ENCODE measurements at regions of chr19 and their contacts with region 1.

Region 1: GRCh38 chr19:11924886-11925650 is at the start of gene ZNF700:
- DNase-seq: peak; percentile 96
- ATAC-seq: peak; percentile 85
- H3K4me3 ChIP-seq: peak within 1 kb of the TSS; percentile 78 to 97 (median 80)
- H3K4me3 Mint-ChIP-seq: peak within 1 kb of the TSS; percentile 98
- H3K27ac ChIP-seq: peak within 1 kb of the TSS; percentile 95 to 97
- H3K27ac Mint-ChIP-seq: peak within 1 kb of the TSS; percentile 99
- H3K4me1 ChIP-seq: peaks cover 10 to 28% of the 10 kb centered on the region in 2 donors
- H3K4me1 Mint-ChIP-seq: peaks cover 40% of the 10 kb centered on the region
- H3K27me3 ChIP-seq: no peaks in the 10 kb centered on the region
- H3K27me3 Mint-ChIP-seq: no peaks in the 10 kb centered on the region
- CTCF ChIP-seq: no peak
- total RNA-seq, gene ZNF700: 34.9 and 40.5 TPM in 2 replicates

Region 2: GRCh38 chr19:11482384-11483050 is 442.6 kb before region 1 on chr19:
- CTCF ChIA-PET with region 1: no interaction called
- POLR2A ChIA-PET with region 1: no interaction called
- intact Hi-C with region 1: loop called (anchors 5 kb)
- DNase-seq: peak; percentile 93
- ATAC-seq: peak; percentile 79
- H3K4me3 ChIP-seq: peak overlapping the region in 4 of 5 experiments; percentile 20 to 48 (median 30)
- H3K4me3 Mint-ChIP-seq: peak overlapping the region; percentile 80
- H3K27ac ChIP-seq: no peak overlapping the region
- H3K27ac Mint-ChIP-seq: peak overlapping the region; percentile 80
- H3K4me1 ChIP-seq: peaks cover 37 to 42% of the 10 kb centered on the region in 2 donors
- H3K4me1 Mint-ChIP-seq: peaks cover 27% of the 10 kb centered on the region
- H3K27me3 ChIP-seq: peaks cover 0 to 46% (median 25%) of the 10 kb centered on the region in 4 experiments
- H3K27me3 Mint-ChIP-seq: peaks cover 34% of the 10 kb centered on the region
- CTCF ChIP-seq: peak; percentile 93

Region 3: DNA sequence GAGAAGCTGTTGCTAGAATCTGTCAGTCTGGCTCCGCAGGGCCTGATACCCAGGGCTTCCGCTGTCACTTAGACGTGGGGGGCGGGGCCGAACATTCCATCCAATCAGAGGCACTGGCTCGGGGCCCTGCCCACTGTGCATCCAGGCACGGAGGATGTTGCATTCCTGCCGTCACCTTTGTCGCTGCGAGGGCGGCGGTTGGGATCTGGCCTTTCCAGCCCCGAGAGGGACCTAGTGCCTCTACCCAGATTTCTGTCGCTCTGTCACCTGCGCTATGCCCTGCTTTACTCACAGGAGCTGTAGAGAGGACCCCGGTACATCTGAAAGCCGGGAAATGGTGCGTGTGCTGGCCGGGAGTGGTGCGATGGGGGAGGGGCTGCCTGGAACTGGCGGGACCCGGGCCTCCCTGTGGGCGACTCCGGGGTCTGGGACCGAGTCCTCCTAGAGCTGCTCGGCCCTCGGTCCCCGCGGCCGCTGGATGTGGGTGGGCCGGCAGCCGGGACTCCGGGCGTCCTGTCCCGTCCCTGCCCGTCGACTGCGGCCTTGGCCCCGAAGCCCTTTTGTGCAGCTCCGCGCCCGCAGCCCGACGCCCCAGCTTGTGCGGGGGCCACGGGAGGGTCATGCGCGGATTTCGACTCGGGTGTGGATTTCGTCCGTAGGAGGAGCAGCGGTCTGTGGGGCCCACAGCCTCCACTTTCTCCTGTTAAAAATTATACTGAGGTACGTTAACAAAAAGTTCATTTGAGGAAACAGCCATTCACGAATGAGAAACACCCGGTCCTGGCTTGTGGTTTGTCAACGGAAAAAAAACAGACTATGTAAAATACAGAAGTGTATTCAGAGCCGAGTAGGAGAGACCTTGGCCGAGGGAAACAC is 76.2 kb before region 1 on chr19 and contains the start of gene ZNF439:
- CTCF ChIA-PET with region 1: interaction called, 4 read pairs
- POLR2A ChIA-PET with region 1: interaction called, 3 read pairs
- intact Hi-C with region 1: loop called (anchors 2 kb)
- DNase-seq: peak; percentile 93
- ATAC-seq: peak; percentile 97
- H3K4me3 ChIP-seq: peak within 1 kb of the TSS; percentile 57 to 85 (median 83)
- H3K4me3 Mint-ChIP-seq: peak within 1 kb of the TSS; percentile 90
- H3K27ac ChIP-seq: peak within 1 kb of the TSS; percentile 71 to 72
- H3K27ac Mint-ChIP-seq: peak within 1 kb of the TSS; percentile 96
- H3K4me1 ChIP-seq: peaks cover 20 to 24% of the 10 kb centered on the region in 2 donors
- H3K4me1 Mint-ChIP-seq: peaks cover 29% of the 10 kb centered on the region
- H3K27me3 ChIP-seq: no peaks in the 10 kb centered on the region
- H3K27me3 Mint-ChIP-seq: no peaks in the 10 kb centered on the region
- CTCF ChIP-seq: no peak
- total RNA-seq, gene ZNF439: 48.6 and 52.3 TPM in 2 replicates

Region 4: GRCh38 chr19:11987405-11988281 is 62.6 kb after region 1 on chr19:
- CTCF ChIA-PET with region 1: interaction called, 173 read pairs
- POLR2A ChIA-PET with region 1: interaction called, 33 read pairs
- intact Hi-C with region 1: loop called (anchors 1 kb)
- DNase-seq: peak; percentile 93
- ATAC-seq: peak; percentile 93
- H3K4me3 ChIP-seq: peak overlapping the region; percentile 86 to 98 (median 97)
- H3K4me3 Mint-ChIP-seq: peak overlapping the region; percentile 96
- H3K27ac ChIP-seq: peak overlapping the region; percentile 85 to 92
- H3K27ac Mint-ChIP-seq: peak overlapping the region; percentile 89
- H3K4me1 ChIP-seq: peaks cover 0 to 5% of the 10 kb centered on the region in 2 donors
- H3K4me1 Mint-ChIP-seq: peaks cover 24% of the 10 kb centered on the region
- H3K27me3 ChIP-seq: no peaks in the 10 kb centered on the region
- H3K27me3 Mint-ChIP-seq: no peaks in the 10 kb centered on the region
- CTCF ChIP-seq: no peak

Region 5: GRCh38 chr19:12064590-12065538 is 139.8 kb after region 1 on chr19 and contains the start of gene ZNF844:
- CTCF ChIA-PET with region 1: interaction called, 22 read pairs
- POLR2A ChIA-PET with region 1: interaction called, 8 read pairs
- intact Hi-C with region 1: no loop called
- DNase-seq: peak; percentile 89
- ATAC-seq: peak; percentile 96
- H3K4me3 ChIP-seq: peak within 1 kb of the TSS; percentile 73 to 93 (median 76)
- H3K4me3 Mint-ChIP-seq: peak within 1 kb of the TSS; percentile 95
- H3K27ac ChIP-seq: peak within 1 kb of the TSS; percentile 83 to 87
- H3K27ac Mint-ChIP-seq: peak within 1 kb of the TSS; percentile 94
- H3K4me1 ChIP-seq: peaks cover 6 to 16% of the 10 kb centered on the region in 2 donors
- H3K4me1 Mint-ChIP-seq: peaks cover 11% of the 10 kb centered on the region
- H3K27me3 ChIP-seq: no peaks in the 10 kb centered on the region
- H3K27me3 Mint-ChIP-seq: no peaks in the 10 kb centered on the region
- CTCF ChIP-seq: no peak
- total RNA-seq, gene ZNF844: 33.7 and 36.4 TPM in 2 replicates

Region 6: GRCh38 chr19:12145348-12145747 is 220.3 kb after region 1 on chr19:
- CTCF ChIA-PET with region 1: interaction called, 85 read pairs
- POLR2A ChIA-PET with region 1: interaction called, 15 read pairs
- intact Hi-C with region 1: loop called (anchors 1 kb)
- DNase-seq: no peak
- ATAC-seq: no peak
- H3K4me3 ChIP-seq: no peak overlapping the region
- H3K4me3 Mint-ChIP-seq: no peak overlapping the region
- H3K27ac ChIP-seq: no peak overlapping the region
- H3K27ac Mint-ChIP-seq: no peak overlapping the region
- H3K4me1 ChIP-seq: peaks cover 9 to 11% of the 10 kb centered on the region in 2 donors
- H3K4me1 Mint-ChIP-seq: peaks cover 13% of the 10 kb centered on the region
- H3K27me3 ChIP-seq: no peaks in the 10 kb centered on the region
- H3K27me3 Mint-ChIP-seq: no peaks in the 10 kb centered on the region
- CTCF ChIP-seq: no peak